ENCODE measurements at regions of chr1 and their contacts with region 1.

Region 1: GRCh38 chr1:91500756-91501522 is at the start of gene CDC7:
- DNase-seq: peak; percentile 56 to 92 (median 85)
- ATAC-seq: peak; percentile 83
- H3K4me3 ChIP-seq: peak within 1 kb of the TSS; percentile 88 to 98
- H3K4me3 Mint-ChIP-seq: no peak within 1 kb of the TSS
- H3K27ac ChIP-seq: peak within 1 kb of the TSS; percentile 58 to 86
- H3K27ac Mint-ChIP-seq: no peak within 1 kb of the TSS
- H3K4me1 ChIP-seq: peaks cover 10% of the 10 kb centered on the region
- H3K4me1 Mint-ChIP-seq: peaks cover 21% of the 10 kb centered on the region
- H3K27me3 ChIP-seq: no peaks in the 10 kb centered on the region
- H3K27me3 Mint-ChIP-seq: no peaks in the 10 kb centered on the region
- CTCF ChIP-seq: no peak
- total RNA-seq, gene CDC7: 2.2 to 2.7 TPM

Region 2: DNA sequence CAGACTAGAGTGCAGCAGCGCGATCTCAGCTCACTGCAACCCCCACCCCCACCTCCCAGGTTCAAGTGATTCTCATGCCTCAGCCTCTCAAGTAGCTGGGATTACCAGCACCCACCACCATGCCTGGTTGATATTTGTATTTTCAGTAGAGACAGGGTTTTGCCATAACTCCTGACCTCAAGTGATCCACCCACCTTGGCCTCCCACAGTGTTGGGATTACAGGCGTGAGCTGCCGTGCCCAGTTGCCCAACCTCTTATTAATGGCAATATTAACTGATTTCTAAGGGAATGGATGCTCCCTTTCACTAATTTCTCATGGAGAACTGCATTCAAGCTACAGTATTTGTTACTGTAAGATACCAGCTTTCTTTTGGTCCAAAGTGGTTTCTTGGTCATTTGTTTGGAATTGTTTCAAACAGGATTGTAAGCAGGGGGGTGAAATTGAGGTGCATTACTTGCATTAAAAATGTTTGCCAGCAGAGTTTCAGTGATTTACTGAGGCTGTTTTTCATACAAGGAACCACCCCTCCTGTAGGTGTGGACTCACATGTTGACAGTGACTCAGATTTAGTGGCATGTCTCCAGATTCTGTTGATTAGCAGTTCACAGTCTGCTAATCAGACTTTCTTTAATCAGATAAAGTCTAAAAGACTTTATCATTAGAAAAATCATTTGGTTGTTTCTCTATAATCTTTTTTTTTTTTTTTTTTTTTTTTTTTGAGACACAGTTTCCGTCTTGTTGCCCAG is 389.0 kb after region 1 on chr1:
- CTCF ChIA-PET with region 1: no interaction called
- POLR2A ChIA-PET with region 1: no interaction called
- intact Hi-C with region 1: no loop called
- DNase-seq: peak in 2 of 9 experiments; percentile 45 to 53
- ATAC-seq: no peak
- H3K4me3 ChIP-seq: no peak overlapping the region
- H3K4me3 Mint-ChIP-seq: no peak overlapping the region
- H3K27ac ChIP-seq: no peak overlapping the region
- H3K27ac Mint-ChIP-seq: no peak overlapping the region
- H3K4me1 ChIP-seq: peaks cover 13% of the 10 kb centered on the region
- H3K4me1 Mint-ChIP-seq: peaks cover 23% of the 10 kb centered on the region
- H3K27me3 ChIP-seq: no peaks in the 10 kb centered on the region
- H3K27me3 Mint-ChIP-seq: no peaks in the 10 kb centered on the region
- CTCF ChIP-seq: no peak

Region 3: GRCh38 chr1:92080128-92080985 is 579.4 kb after region 1 on chr1 and contains the start of gene BTBD8:
- CTCF ChIA-PET with region 1: no interaction called
- POLR2A ChIA-PET with region 1: no interaction called
- intact Hi-C with region 1: loop called in 1 of 2 experiments (anchors 2 kb)
- DNase-seq: peak; percentile 75 to 91 (median 88)
- ATAC-seq: peak; percentile 97
- H3K4me3 ChIP-seq: peak within 1 kb of the TSS; percentile 82 to 88
- H3K4me3 Mint-ChIP-seq: peak within 1 kb of the TSS; percentile 95
- H3K27ac ChIP-seq: peak within 1 kb of the TSS; percentile 60 to 71
- H3K27ac Mint-ChIP-seq: peak within 1 kb of the TSS; percentile 93
- H3K4me1 ChIP-seq: peaks cover 5% of the 10 kb centered on the region
- H3K4me1 Mint-ChIP-seq: peaks cover 13% of the 10 kb centered on the region
- H3K27me3 ChIP-seq: no peaks in the 10 kb centered on the region
- H3K27me3 Mint-ChIP-seq: no peaks in the 10 kb centered on the region
- CTCF ChIP-seq: no peak
- total RNA-seq, gene BTBD8: 0.72 to 1.2 TPM

Region 4: DNA sequence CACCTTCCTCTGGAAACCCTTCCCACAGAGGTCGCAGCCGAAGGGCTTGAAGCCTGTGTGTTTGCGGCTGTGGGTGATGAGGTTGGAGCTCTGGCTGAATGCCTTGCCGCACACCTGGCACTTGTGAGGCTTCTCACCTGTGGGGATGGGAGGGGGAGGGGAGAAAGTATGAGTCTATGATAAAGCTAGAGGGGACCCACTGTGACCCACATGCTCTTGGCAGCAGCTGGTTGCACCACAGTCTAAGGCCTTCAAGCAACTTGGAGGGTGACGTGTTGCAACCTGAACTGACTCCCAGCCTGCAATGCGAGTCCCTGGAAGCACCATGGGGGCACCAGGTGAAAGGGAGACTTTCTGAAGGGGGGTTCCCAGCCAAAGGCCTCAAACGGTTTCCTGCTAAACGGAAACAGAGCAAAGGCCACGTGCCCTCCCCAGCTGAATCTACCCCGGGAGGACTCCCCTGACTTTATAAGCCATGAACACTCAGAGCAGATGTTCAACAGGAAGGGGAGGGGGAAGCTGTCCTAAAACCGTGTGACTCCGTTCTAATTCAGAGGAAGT is 975.2 kb after region 1 on chr1:
- CTCF ChIA-PET with region 1: no interaction called
- POLR2A ChIA-PET with region 1: no interaction called
- intact Hi-C with region 1: loop called in 1 of 2 experiments (anchors 10 kb)
- DNase-seq: peak; percentile 15 to 93 (median 64)
- ATAC-seq: peak; percentile 90
- H3K4me3 ChIP-seq: no peak overlapping the region
- H3K4me3 Mint-ChIP-seq: peak overlapping the region; percentile 26
- H3K27ac ChIP-seq: peak overlapping the region in 1 of 2 experiments; percentile 70
- H3K27ac Mint-ChIP-seq: peak overlapping the region; percentile 81
- H3K4me1 ChIP-seq: peaks cover 41% of the 10 kb centered on the region
- H3K4me1 Mint-ChIP-seq: peaks cover 64% of the 10 kb centered on the region
- H3K27me3 ChIP-seq: no peaks in the 10 kb centered on the region
- H3K27me3 Mint-ChIP-seq: no peaks in the 10 kb centered on the region
- CTCF ChIP-seq: no peak

Region 5: DNA sequence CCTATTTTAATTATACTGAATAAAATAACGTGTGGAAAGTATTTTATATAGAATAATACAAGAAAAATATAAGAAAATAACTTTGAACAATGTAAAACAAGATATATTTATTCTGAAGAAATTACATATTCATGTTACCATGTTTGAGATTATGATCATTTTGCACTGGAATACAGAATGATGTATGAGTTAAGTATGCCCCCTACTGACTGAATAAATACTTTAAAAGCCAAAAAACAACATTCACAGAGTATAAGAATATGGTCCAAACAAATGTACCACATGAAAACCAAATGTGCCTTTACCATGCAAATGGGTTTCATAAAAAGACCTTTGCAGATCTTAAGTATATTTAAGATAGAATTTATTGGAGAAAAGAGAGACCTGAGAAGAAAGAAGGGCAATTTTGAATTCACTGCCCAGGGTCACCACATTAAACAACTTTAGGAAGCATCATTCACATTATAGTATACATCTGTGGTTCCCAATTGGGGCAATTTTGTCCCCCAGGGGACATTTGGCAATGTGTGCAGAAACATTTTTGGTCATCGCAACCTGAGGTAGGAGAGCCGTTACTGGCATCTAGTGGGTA is 1122.3 kb after region 1 on chr1:
- CTCF ChIA-PET with region 1: no interaction called
- POLR2A ChIA-PET with region 1: no interaction called
- intact Hi-C with region 1: loop called in 1 of 2 experiments (anchors 10 kb)
- DNase-seq: peak in 2 of 9 experiments; percentile 39 to 57
- ATAC-seq: no peak
- H3K4me3 ChIP-seq: no peak overlapping the region
- H3K4me3 Mint-ChIP-seq: no peak overlapping the region
- H3K27ac ChIP-seq: no peak overlapping the region
- H3K27ac Mint-ChIP-seq: no peak overlapping the region
- H3K4me1 ChIP-seq: no peaks in the 10 kb centered on the region
- H3K4me1 Mint-ChIP-seq: no peaks in the 10 kb centered on the region
- H3K27me3 ChIP-seq: no peaks in the 10 kb centered on the region
- H3K27me3 Mint-ChIP-seq: no peaks in the 10 kb centered on the region
- CTCF ChIP-seq: peak; percentile 81